PC-9 (cell line): ENCODE measurements at regions of chr3 and their contacts with region 1.

Region 1: DNA sequence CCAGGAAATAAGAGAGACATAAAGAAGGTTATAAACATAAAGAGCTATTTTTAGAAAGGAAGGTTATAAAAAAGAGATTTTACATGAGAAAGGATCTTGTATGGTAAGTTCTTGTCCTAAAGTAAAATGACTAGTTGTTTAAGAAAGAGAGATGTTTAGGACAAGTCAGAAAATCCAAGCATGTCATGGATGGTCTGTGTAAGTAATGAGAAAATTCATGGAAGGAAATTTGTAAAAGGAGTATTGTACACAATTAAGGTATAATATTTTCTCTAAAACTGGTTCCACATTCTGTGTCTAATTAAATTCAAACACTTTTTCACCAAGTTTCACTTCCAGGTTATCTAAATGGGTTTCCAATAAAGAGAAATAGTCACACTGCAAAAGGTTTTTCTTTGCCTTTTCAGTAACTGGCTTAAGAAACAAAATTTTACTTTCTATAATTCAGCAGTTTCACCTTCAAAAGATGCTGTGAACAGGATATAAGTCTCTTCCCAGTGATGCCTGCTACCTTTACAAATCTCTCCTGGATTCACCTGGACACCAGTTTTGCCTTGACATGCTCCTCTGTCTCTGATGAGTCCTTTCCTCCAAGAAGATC is 455.7 kb downstream of the ZIC1 start:
- DNase-seq: no peak
- H3K4me3 ChIP-seq: no peak overlapping the region
- H3K27ac ChIP-seq: no peak overlapping the region
- H3K4me1 ChIP-seq: no peaks in the 10 kb centered on the region
- H3K27me3 ChIP-seq: no peaks in the 10 kb centered on the region
- CTCF ChIP-seq: no peak

Region 2: GRCh38 chr3:148075763-148076716 is 211.2 kb after region 1 on chr3:
- CTCF ChIA-PET with region 1: no interaction called
- POLR2A ChIA-PET with region 1: no interaction called
- intact Hi-C with region 1: no loop called
- DNase-seq: no peak
- H3K4me3 ChIP-seq: no peak overlapping the region
- H3K27ac ChIP-seq: no peak overlapping the region
- H3K4me1 ChIP-seq: no peaks in the 10 kb centered on the region
- H3K27me3 ChIP-seq: no peaks in the 10 kb centered on the region
- CTCF ChIP-seq: peak; percentile 53

Region 3: DNA sequence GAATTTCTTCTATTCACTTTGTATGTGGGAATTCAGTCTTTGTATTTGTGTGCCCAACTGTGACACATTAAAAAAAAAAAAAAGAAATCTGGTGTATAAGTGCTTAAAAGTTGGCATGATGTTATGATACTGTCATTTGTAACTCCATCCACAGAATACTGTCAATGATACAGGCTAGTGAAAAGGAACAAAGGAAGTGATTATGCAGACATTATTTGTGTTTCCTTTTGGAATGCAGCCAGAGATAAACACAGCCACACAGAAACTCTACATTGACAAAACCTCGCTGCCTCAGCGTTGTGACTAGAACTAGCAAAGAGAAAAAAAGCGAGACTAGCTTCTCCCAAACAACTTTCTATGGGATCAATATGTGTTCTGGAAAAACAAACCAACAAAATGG is 313.6 kb after region 1 on chr3:
- CTCF ChIA-PET with region 1: no interaction called
- POLR2A ChIA-PET with region 1: interaction called, 38 read pairs
- intact Hi-C with region 1: no loop called
- DNase-seq: no peak
- H3K4me3 ChIP-seq: no peak overlapping the region
- H3K27ac ChIP-seq: no peak overlapping the region
- H3K4me1 ChIP-seq: no peaks in the 10 kb centered on the region
- H3K27me3 ChIP-seq: no peaks in the 10 kb centered on the region
- CTCF ChIP-seq: no peak